ENCODE measurements at regions of chr13 and their contacts with region 1.

Region 1: GRCh38 chr13:100721885-100722512 is 47.4 kb upstream of the TMTC4 start:
- DNase-seq: no peak
- ATAC-seq: no peak
- H3K4me3 Mint-ChIP-seq: no peak overlapping the region
- H3K27ac Mint-ChIP-seq: no peak overlapping the region
- H3K4me1 Mint-ChIP-seq: no peaks in the 10 kb centered on the region
- H3K27me3 Mint-ChIP-seq: peaks cover 13% of the 10 kb centered on the region
- CTCF ChIP-seq: peak; percentile 42

Region 2: DNA sequence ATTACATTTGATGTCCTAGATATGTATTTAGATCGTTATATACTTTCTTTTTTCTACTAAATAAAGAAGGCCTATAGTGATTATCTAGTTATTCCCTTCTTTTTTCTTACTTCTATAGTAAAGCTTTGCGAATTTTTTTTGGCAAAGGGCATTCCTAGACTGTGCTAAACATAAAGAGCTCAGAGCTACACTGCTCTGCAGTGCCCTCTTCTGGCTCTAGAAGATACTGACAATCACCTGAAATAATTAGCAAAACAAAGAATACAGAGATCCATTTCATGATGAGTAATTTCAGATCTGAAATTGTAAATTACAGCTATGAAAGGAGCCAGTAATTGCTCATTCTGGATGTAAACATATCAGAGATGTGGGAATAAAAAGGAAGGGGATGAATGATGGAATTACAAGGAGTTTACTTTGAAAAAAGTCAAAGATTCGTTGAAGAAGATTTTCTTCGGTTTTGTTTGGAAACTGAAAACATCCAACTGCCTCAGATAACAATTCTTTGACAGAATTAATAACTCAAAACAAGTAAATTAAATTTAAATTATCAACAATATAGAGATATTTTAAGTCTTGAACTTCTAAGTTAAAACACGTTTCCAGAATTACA is 405.8 kb after region 1 on chr13:
- CTCF ChIA-PET with region 1: no interaction called
- POLR2A ChIA-PET with region 1: no interaction called
- intact Hi-C with region 1: loop called (anchors 10 kb)
- DNase-seq: no peak
- ATAC-seq: peak; percentile 49
- H3K4me3 Mint-ChIP-seq: no peak overlapping the region
- H3K27ac Mint-ChIP-seq: no peak overlapping the region
- H3K4me1 Mint-ChIP-seq: no peaks in the 10 kb centered on the region
- H3K27me3 Mint-ChIP-seq: no peaks in the 10 kb centered on the region
- CTCF ChIP-seq: no peak

Measured in activated B cell treated with CpG ODN at 0.5 μM for 24 hours (primary cell).